GM12878 (cell line): ENCODE measurements at regions of chr2 and their contacts with region 1.

Region 1: DNA sequence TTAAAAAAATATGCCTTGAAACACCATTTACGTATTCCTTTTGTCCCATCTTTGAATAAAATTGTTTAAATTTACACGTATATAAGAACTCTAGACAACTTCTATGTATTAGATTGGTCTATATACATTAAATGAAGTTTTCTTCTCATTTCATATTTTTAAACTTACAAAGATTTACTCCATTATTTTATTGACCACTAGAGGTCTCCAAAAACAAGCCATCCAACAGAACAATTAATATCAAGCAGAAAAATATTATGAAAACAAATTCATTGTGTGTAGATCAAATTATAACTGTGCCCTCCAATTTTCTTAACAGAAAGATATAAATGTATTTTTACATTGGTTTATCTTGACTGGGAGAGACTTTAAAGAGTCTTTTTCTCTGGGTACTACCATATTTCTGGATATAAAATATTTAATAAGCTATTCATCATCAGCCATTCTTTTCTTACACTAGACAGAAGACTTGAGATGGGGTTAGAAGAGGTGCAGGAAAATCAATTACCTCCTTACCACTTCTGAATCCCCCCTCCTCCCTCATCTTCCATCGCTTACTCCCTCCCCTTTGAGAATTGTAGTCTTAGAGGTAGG is 66.5 kb downstream of the DPP4 start:
- DNase-seq: no peak
- ATAC-seq: peak; percentile 33; the same call in 1 of the 3 replicates
- H3K4me3 ChIP-seq: no peak overlapping the region
- H3K27ac ChIP-seq: no peak overlapping the region
- H3K4me1 ChIP-seq: no peaks in the 10 kb centered on the region
- H3K27me3 ChIP-seq: no peaks in the 10 kb centered on the region
- CTCF ChIP-seq: peak; percentile 34 to 60 (median 42); a peak in 3 of 6 replicates
- EP300 ChIP-seq: no peak
- POLR2A ChIP-seq: no peak
- RAD21 ChIP-seq: peak; percentile 64

Region 2: DNA sequence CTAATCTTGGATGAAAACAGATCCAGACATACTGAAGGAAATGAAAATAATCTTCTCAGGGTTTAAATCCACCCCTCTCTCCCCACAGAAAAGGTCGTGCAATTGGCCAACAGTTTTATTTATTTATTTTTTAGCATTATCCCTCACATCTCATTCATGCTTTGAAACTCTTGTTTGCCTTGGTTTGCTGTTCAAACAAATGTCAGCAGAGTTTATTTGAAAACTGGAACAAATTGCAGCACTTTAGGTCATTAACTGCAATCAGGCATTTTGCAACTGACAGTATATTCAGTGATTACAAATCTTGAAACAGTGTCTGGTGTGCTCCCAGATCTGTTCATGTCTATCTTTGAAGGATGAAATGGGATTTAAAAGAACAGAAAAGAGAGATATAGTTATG is 162.7 kb before region 1 on chr2:
- CTCF ChIA-PET with region 1: no interaction called
- POLR2A ChIA-PET with region 1: no interaction called
- RAD21 ChIA-PET with region 1: no interaction called
- SMC1A ChIA-PET with region 1: no interaction called
- in situ Hi-C with region 1: no loop called
- intact Hi-C with region 1: no loop called
- DNase-seq: no peak
- ATAC-seq: no peak
- H3K4me3 ChIP-seq: no peak overlapping the region
- H3K27ac ChIP-seq: no peak overlapping the region
- H3K4me1 ChIP-seq: no peaks in the 10 kb centered on the region
- H3K27me3 ChIP-seq: no peaks in the 10 kb centered on the region
- CTCF ChIP-seq: no peak
- EP300 ChIP-seq: no peak
- POLR2A ChIP-seq: no peak
- RAD21 ChIP-seq: no peak

Region 3: DNA sequence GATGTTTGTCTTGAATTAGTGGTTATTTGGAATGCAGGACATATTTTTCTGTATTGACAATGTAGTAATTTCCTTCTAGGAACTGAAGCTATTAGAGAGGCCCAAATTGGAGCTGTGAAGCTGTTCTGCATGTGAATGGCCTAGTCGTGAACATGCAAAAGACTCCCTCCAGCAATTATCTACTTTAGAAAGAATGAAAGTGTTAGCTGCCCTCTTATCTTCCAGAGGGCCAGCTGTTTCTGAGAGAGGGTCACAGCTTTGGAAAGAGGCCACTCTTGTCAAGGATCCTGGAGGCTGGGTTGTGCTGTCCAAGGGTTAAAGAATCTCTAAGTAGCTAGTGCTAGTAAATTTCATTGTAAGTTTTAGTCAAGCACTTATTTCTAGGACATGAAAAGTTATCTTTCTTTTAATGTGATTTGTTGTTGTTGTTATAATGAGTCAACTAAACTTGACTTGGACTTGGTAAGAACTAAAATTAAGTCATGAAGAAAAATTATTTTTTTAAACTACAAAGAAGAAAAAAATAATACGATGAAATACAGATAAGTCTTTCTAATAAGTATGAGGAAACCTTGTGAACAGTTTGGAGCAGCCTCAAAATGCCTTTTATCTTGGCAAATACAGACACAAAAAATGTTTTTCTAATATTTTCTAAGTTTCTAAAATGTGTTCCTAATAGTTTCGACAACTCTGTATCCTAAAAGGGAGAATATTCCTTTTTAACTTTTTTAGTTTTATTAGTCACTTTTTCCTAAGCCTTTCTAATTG is 29.7 kb after region 1 on chr2:
- CTCF ChIA-PET with region 1: no interaction called
- POLR2A ChIA-PET with region 1: no interaction called
- RAD21 ChIA-PET with region 1: no interaction called
- SMC1A ChIA-PET with region 1: no interaction called
- in situ Hi-C with region 1: no loop called
- intact Hi-C with region 1: no loop called
- DNase-seq: no peak
- ATAC-seq: no peak
- H3K4me3 ChIP-seq: no peak overlapping the region
- H3K27ac ChIP-seq: no peak overlapping the region
- H3K4me1 ChIP-seq: no peaks in the 10 kb centered on the region
- H3K27me3 ChIP-seq: no peaks in the 10 kb centered on the region
- CTCF ChIP-seq: no peak
- EP300 ChIP-seq: no peak
- POLR2A ChIP-seq: no peak
- RAD21 ChIP-seq: no peak

Region 4: GRCh38 chr2:162091325-162092007 is 83.9 kb after region 1 on chr2:
- CTCF ChIA-PET with region 1: interaction called, 23 read pairs
- POLR2A ChIA-PET with region 1: no interaction called
- RAD21 ChIA-PET with region 1: interaction called, 6 read pairs
- SMC1A ChIA-PET with region 1: interaction called, 8 read pairs
- in situ Hi-C with region 1: no loop called
- intact Hi-C with region 1: no loop called
- DNase-seq: no peak
- ATAC-seq: peak; percentile 90
- H3K4me3 ChIP-seq: no peak overlapping the region
- H3K27ac ChIP-seq: no peak overlapping the region
- H3K4me1 ChIP-seq: no peaks in the 10 kb centered on the region
- H3K27me3 ChIP-seq: no peaks in the 10 kb centered on the region
- CTCF ChIP-seq: peak; percentile 39 to 58 (median 55); a peak in 4 of 6 replicates
- EP300 ChIP-seq: no peak
- POLR2A ChIP-seq: no peak
- RAD21 ChIP-seq: peak; percentile 62

Region 5: DNA sequence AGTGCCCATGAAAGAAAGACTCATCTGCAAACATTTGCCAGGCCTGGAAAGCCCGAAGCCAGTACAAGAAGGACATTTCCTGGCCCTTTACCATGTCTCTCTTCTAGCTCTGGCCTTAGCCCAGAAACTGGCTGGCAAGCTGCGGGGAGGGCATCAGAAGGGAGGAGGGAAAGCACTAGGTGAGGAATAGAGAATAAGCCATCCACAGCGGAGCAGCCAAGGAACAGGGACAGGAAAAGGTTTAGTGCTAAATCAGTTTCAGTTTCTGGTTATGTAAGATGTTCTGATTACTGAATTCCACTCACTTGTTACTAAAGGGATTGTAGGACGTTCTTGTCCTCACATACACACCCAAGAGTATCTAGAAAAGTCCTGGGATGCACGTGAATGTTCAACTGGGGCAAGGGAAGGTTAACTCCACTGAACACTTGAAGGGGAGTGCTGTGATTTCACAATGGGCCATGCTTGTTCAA is 111.1 kb after region 1 on chr2:
- CTCF ChIA-PET with region 1: interaction called, 42 read pairs
- POLR2A ChIA-PET with region 1: interaction called, 5 read pairs
- RAD21 ChIA-PET with region 1: interaction called, 9 read pairs
- SMC1A ChIA-PET with region 1: interaction called, 45 read pairs
- in situ Hi-C with region 1: no loop called
- intact Hi-C with region 1: loop called (anchors 1 kb)
- DNase-seq: no peak
- ATAC-seq: no peak
- H3K4me3 ChIP-seq: no peak overlapping the region
- H3K27ac ChIP-seq: no peak overlapping the region
- H3K4me1 ChIP-seq: no peaks in the 10 kb centered on the region
- H3K27me3 ChIP-seq: no peaks in the 10 kb centered on the region
- CTCF ChIP-seq: no peak
- EP300 ChIP-seq: no peak
- POLR2A ChIP-seq: no peak
- RAD21 ChIP-seq: no peak